ENCODE measurements at regions of chr22 and their contacts with region 1.

Region 1: DNA sequence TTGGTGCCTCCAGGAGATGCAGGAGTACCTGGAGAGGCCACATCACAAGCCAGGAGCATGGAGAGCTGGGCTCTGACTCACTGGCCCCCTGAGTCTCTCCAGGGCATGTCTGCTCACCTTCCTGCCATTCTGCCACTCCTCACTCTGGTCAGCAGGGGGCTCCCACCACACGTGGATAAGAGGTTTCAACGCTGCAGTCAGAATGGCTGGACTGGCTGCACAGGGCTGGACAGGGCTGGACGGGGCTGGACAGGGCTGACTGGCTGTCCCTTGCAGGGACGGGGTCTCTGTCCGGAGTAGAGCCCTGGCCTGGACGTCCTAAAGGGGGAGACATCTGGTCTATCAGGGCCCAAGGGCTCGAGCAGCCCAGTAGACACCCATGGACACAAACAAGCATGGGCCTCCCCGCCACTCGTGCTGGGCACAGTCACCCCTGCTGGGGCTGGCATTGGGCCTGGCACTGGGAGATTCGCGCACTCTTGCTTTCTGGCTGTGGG is 34.6 kb downstream of the CYTH4 start:
- DNase-seq: peak; percentile 70 to 86 (median 85)
- ATAC-seq: peak; percentile 78 to 86
- H3K4me3 ChIP-seq: no peak overlapping the region
- H3K27ac ChIP-seq: no peak overlapping the region
- H3K4me1 ChIP-seq: no peaks in the 10 kb centered on the region
- H3K27me3 ChIP-seq: no peaks in the 10 kb centered on the region

Region 2: GRCh38 chr22:37282385-37282677 is 34.6 kb before region 1 on chr22 and contains the start of gene CYTH4:
- intact Hi-C with region 1: no loop called
- DNase-seq: peak; percentile 72 to 88 (median 85)
- ATAC-seq: peak; percentile 47 to 67
- H3K4me3 ChIP-seq: peak within 1 kb of the TSS; percentile 16
- H3K27ac ChIP-seq: peak within 1 kb of the TSS; percentile 49
- H3K4me1 ChIP-seq: peaks cover 3% of the 10 kb centered on the region
- H3K27me3 ChIP-seq: no peaks in the 10 kb centered on the region
- total RNA-seq, gene CYTH4: 5.1 to 7.0 (median 5.9) TPM

Region 3: DNA sequence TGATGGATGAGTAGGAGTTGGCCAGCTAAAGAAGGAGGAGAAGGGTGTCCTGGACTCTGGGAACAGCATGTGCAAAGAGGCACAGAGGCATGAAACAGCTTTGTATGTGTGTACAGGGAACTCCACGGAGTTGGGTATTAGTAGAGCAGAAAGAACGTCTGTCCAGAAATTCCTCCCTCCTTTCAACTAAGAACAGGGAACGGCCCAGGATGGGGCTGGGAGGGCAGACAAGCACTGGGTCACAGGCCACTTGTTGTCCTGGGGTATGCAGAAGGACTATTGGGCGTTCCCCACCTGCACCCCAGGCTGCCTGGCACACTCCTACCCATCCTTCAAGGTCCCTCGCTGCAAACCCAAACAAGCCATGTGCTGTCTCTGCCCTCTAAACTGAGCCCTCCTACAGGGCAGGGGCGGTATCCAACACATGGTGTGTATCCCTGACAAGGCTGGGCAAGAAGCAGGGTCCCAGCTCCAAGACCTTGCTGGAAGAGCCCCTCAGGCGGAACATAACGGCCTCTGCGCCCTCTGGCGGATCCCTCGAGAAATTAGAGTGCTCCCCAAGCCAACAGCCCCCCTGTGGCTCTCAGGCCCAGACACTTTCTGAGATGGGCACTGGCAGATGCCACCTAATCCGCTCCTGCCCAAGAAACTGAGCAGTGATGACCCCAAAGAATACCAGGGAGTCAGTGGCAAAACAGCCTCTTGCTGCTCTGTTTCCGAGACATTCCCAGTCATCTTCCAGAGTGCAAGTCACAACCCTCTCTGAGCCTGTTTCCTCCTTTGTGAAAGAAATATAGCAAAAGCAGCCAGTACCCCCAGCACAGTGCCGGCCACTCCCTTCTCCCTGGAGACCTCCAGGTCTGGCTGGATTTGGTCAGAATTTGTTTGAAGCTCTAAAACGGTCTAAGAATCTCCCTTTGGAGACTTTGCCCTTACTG is 112.0 kb after region 1 on chr22:
- intact Hi-C with region 1: loop called in 3 of 4 experiments (anchors 2 to 10 kb)
- DNase-seq: peak in 2 of 3 donors; percentile 40 to 75
- ATAC-seq: peak in 1 of 2 donors; percentile 50
- H3K4me3 ChIP-seq: no peak overlapping the region
- H3K27ac ChIP-seq: no peak overlapping the region
- H3K4me1 ChIP-seq: no peaks in the 10 kb centered on the region
- H3K27me3 ChIP-seq: no peaks in the 10 kb centered on the region

Region 4: DNA sequence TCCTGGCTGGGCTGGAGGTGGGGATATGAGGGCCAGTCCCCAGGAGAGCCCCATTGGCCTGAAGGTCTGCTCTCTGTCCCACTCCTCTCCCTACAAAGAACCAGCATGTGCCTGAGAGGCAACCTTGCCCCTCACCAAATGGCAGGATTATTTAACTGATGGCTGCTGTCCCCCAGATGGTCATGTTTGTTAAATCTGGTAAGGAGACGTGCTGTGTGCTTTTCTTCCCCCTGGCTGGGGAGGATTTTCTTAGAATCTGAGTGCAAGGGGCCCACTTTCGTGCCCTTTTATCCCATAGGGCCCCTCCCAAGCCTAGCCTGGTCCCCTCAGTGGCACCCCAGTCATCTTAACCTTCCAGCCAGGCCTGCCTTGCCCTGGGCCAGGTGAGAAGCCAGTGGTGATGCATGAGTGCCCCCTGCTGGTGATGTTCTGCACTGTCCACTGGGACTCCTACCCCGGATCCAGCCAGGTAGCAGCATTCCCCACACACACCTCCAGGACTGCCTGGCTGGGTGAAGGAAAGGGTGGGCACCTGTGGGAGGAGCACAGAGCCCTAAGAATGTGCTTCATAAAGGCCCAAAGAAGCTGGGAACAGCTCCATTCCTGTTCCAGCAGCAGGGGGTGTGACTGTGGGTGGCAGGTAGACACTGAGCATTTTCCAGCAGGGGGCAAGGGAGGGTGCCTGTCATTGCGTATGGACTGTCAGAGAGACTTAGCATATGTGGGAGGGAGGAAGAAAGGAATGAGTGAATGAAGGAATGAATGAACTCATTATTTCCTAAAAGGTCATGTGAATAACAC is 140.4 kb after region 1 on chr22:
- intact Hi-C with region 1: loop called in 3 of 4 experiments (anchors 2 to 5 kb)
- DNase-seq: peak; percentile 58 to 86 (median 80)
- ATAC-seq: peak; percentile 80 to 82
- H3K4me3 ChIP-seq: no peak overlapping the region
- H3K27ac ChIP-seq: no peak overlapping the region
- H3K4me1 ChIP-seq: no peaks in the 10 kb centered on the region
- H3K27me3 ChIP-seq: no peaks in the 10 kb centered on the region

Region 5: GRCh38 chr22:37566903-37567820 is 250.2 kb after region 1 on chr22:
- intact Hi-C with region 1: loop called in 2 of 4 experiments (anchors 5 to 10 kb)
- DNase-seq: peak; percentile 75 to 93 (median 93)
- ATAC-seq: peak; percentile 33 to 50
- H3K4me3 ChIP-seq: no peak overlapping the region
- H3K27ac ChIP-seq: peak overlapping the region; percentile 7
- H3K4me1 ChIP-seq: peaks cover 11% of the 10 kb centered on the region
- H3K27me3 ChIP-seq: no peaks in the 10 kb centered on the region

Measured in right cardiac atrium (tissue), 5 donors.